HepG2 (cell line): ENCODE measurements at regions of chr3 and their contacts with region 1.

Region 1: DNA sequence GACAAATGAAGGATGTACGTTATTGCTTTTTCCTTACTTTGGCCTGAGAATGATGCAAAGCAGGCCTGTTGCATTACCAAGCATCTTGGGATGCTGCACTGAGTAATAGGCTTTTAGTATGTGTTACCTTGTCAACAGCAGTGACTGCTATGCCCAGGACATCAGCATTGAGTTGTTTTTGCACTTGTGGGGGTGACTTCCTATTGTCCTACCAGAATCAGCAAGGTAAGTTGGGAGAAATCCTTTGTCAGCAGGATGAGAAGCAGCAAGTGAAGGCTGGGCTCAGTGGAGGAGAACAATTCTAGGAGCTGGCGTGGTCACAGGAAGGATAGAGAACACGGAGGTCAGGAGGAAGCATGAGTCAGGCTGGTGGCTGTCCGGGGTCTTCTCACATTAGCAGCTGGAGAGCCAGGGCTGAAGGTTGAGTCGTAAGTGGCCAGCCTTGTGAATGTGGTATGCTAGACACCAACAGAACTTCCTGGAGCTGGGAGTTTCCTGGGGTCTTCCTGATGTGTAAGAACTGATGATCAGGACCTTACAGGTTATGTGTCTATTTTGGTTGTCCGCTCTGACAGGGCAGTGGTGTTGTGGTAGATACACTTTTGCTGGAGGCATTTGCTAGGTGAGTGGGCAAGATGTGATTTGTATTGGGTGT is 142.7 kb downstream of the FNDC3B start:
- DNase-seq: no peak
- ATAC-seq: no peak
- H3K4me3 ChIP-seq: no peak overlapping the region
- H3K27ac ChIP-seq: peak overlapping the region; percentile 20
- H3K4me1 ChIP-seq: peaks cover 71% of the 10 kb centered on the region
- H3K27me3 ChIP-seq: no peaks in the 10 kb centered on the region
- CTCF ChIP-seq: no peak
- EP300 ChIP-seq: no peak
- POLR2A ChIP-seq: no peak; a peak in 1 of 4 replicates
- RAD21 ChIP-seq: no peak

Region 2: DNA sequence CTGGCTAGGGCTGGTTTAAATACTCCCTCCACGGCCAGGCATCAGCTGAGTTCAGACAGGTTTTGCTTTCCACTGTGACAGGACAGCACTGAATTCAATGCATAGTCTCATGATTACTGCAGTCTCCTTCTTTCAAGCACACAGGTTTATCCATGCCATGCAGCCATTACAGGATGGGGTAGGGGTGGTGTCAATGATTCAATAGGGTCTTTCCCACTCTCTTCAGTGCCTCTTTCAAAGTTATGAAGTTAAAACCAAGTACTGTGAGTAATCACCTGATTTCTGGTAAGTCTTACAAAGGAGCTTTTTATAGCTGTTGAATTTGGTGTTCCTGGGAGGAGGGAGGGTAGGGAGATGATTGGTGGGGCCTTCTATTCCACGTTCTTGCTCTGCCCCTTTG is 291.7 kb before region 1 on chr3:
- CTCF ChIA-PET with region 1: no interaction called
- POLR2A ChIA-PET with region 1: no interaction called
- in situ Hi-C with region 1: no loop called
- intact Hi-C with region 1: no loop called
- DNase-seq: no peak
- ATAC-seq: no peak; the same call in 2 of the 3 replicates
- H3K4me3 ChIP-seq: no peak overlapping the region
- H3K27ac ChIP-seq: no peak overlapping the region
- H3K4me1 ChIP-seq: peaks cover 10% of the 10 kb centered on the region
- H3K27me3 ChIP-seq: no peaks in the 10 kb centered on the region
- CTCF ChIP-seq: no peak
- EP300 ChIP-seq: no peak
- POLR2A ChIP-seq: no peak
- RAD21 ChIP-seq: no peak

Region 3: GRCh38 chr3:172138795-172139441 is 43.1 kb before region 1 on chr3:
- CTCF ChIA-PET with region 1: no interaction called
- POLR2A ChIA-PET with region 1: interaction called, 18 read pairs
- in situ Hi-C with region 1: no loop called
- intact Hi-C with region 1: loop called (anchors 5 kb)
- DNase-seq: peak; percentile 70
- ATAC-seq: no peak
- H3K4me3 ChIP-seq: no peak overlapping the region; a peak in 1 of 6 replicates
- H3K27ac ChIP-seq: peak overlapping the region; percentile 89
- H3K4me1 ChIP-seq: peaks cover 94% of the 10 kb centered on the region
- H3K27me3 ChIP-seq: no peaks in the 10 kb centered on the region
- CTCF ChIP-seq: no peak
- EP300 ChIP-seq: peak in 1 of 2 experiments; percentile 51; a peak in 2 of 4 replicates
- POLR2A ChIP-seq: peak; percentile 28 to 38; a peak in 2 of 4 replicates
- RAD21 ChIP-seq: no peak

Region 4: GRCh38 chr3:172201870-172202236 is 19.8 kb after region 1 on chr3:
- CTCF ChIA-PET with region 1: no interaction called
- POLR2A ChIA-PET with region 1: interaction called, 7 read pairs
- in situ Hi-C with region 1: no loop called
- intact Hi-C with region 1: loop called (anchors 2 kb)
- DNase-seq: no peak
- ATAC-seq: no peak
- H3K4me3 ChIP-seq: no peak overlapping the region
- H3K27ac ChIP-seq: peak overlapping the region; percentile 71
- H3K4me1 ChIP-seq: peaks cover 85% of the 10 kb centered on the region
- H3K27me3 ChIP-seq: no peaks in the 10 kb centered on the region
- CTCF ChIP-seq: no peak
- EP300 ChIP-seq: no peak
- POLR2A ChIP-seq: no peak
- RAD21 ChIP-seq: no peak

Region 5: DNA sequence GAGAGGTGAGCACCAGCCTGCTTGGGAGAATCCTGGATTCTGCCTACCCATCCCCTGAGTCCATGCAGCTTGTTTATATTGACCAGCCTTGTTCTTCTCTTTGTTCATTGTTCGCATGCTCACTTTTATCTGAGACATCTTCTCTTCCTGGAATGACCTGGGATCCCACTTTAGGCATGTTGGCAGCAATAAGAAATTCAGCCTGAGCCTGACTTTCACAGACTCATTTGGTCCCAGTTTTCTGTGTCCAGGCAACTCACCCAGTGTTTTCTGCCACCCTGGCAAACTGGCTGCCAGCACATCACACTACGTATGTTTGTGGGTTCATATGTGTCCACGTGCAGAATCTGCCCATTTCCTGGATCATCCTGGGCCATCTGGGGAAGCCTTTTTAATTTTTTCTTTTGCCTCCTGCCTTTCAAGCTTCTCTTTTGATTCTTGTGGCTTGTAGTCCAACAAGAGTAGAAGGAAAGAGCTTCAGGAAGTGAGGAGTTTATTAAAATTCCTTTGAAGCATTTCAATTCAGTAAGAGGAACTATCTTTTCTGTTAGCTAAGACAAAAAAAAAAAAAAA is 57.2 kb after region 1 on chr3:
- CTCF ChIA-PET with region 1: no interaction called
- POLR2A ChIA-PET with region 1: no interaction called
- in situ Hi-C with region 1: no loop called
- intact Hi-C with region 1: no loop called
- DNase-seq: no peak
- ATAC-seq: no peak
- H3K4me3 ChIP-seq: no peak overlapping the region
- H3K27ac ChIP-seq: no peak overlapping the region
- H3K4me1 ChIP-seq: peaks cover 20% of the 10 kb centered on the region; the same call in 1 of the 2 replicates
- H3K27me3 ChIP-seq: no peaks in the 10 kb centered on the region
- CTCF ChIP-seq: no peak
- EP300 ChIP-seq: no peak
- POLR2A ChIP-seq: no peak
- RAD21 ChIP-seq: no peak

Region 6: GRCh38 chr3:172259111-172259541 is 77.1 kb after region 1 on chr3:
- CTCF ChIA-PET with region 1: no interaction called
- POLR2A ChIA-PET with region 1: no interaction called
- in situ Hi-C with region 1: no loop called
- intact Hi-C with region 1: no loop called
- DNase-seq: no peak
- ATAC-seq: no peak
- H3K4me3 ChIP-seq: no peak overlapping the region
- H3K27ac ChIP-seq: no peak overlapping the region
- H3K4me1 ChIP-seq: peaks cover 46% of the 10 kb centered on the region
- H3K27me3 ChIP-seq: no peaks in the 10 kb centered on the region
- CTCF ChIP-seq: no peak
- EP300 ChIP-seq: no peak
- POLR2A ChIP-seq: no peak
- RAD21 ChIP-seq: no peak

Region 7: GRCh38 chr3:172467170-172467824 is 285.2 kb after region 1 on chr3:
- CTCF ChIA-PET with region 1: no interaction called
- POLR2A ChIA-PET with region 1: no interaction called
- in situ Hi-C with region 1: no loop called
- intact Hi-C with region 1: no loop called
- DNase-seq: no peak
- ATAC-seq: no peak
- H3K4me3 ChIP-seq: no peak overlapping the region
- H3K27ac ChIP-seq: no peak overlapping the region
- H3K4me1 ChIP-seq: no peaks in the 10 kb centered on the region
- H3K27me3 ChIP-seq: peaks cover 0 to 5% of the 10 kb centered on the region in 2 experiments; a peak in 1 of 5 replicates
- CTCF ChIP-seq: no peak
- EP300 ChIP-seq: no peak
- POLR2A ChIP-seq: no peak
- RAD21 ChIP-seq: no peak